Common myeloid progenitor, CD34-positive (primary cell): ENCODE measurements at regions of chr14 and their contacts with region 1.

Region 1: GRCh38 chr14:64209444-64210131 is 84.6 kb downstream of the ESR2 start:
- DNase-seq: peak; percentile 67 to 95 (median 92)
- H3K4me3 ChIP-seq: peak overlapping the region in 3 of 7 experiments; percentile 30 to 34 (median 34)
- H3K27ac ChIP-seq: no peak overlapping the region
- H3K4me1 ChIP-seq: peaks cover 2 to 24% (median 18%) of the 10 kb centered on the region in 4 experiments
- H3K27me3 ChIP-seq: no peaks in the 10 kb centered on the region

Region 2: DNA sequence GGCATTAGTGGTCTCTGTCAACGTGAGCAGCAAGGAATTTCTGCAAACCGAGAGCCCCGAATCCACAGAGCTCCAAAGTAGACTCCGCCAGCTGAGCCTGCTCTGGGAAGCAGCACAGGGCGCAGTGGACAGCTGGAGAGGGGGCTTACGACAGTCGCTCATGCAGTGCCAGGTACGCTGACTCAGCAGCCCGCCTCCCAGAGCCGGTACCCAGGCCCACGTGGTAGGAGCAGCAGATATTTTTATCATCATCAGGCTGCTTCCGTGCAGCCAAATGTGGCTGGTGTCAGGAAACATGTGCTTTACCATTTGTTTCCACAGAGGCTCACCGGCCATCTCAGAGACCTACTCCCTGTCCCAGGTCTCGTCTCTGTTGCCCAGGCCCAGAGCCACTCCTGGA is 10.9 kb after region 1 on chr14:
- CTCF ChIA-PET with region 1: interaction called, 26 read pairs
- POLR2A ChIA-PET with region 1: no interaction called
- DNase-seq: peak; percentile 89 to 96 (median 95)
- H3K4me3 ChIP-seq: peak overlapping the region in 2 of 7 experiments; percentile 33 to 45
- H3K27ac ChIP-seq: no peak overlapping the region
- H3K4me1 ChIP-seq: peaks cover 7 to 53% (median 32%) of the 10 kb centered on the region in 4 experiments
- H3K27me3 ChIP-seq: no peaks in the 10 kb centered on the region